A549 (cell line): ENCODE measurements at regions of chr12 and their contacts with region 1.

Region 1: DNA sequence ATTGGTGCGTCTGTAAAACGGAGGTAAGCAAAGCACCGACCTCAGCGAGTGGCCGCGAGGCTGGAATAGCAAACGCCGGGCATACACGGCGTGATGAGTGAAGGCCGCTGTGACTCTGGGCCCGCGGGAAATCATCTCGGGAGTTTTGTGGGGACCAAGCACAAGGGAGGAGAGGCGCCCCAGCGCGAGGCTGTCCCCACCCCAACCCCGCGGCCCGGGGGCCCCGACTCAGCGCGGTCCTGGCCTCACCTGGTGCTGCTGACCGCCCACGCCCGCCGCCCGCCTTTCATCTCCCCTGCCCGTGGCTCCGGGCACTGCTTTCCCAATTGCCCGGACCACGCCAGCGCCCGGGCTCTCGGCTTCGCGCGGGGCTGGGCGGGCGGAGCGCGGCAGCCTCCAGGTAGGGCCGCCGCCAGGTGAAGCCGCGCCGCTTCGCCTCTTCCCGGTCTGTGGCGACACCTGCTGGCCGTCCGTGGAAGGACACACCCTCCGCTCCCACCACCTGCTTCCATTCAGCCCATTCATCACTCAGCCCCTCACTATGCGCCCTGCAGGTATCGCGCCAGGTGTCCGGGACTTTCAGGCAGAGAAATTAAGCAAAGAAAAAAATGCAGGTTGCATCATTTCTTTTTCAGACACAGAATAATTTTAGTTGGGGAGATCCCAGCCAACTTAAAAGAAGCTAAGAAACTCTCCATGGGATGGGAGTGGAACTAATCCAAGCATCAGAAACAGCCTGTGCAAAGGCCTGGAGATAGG is 360.4 kb downstream of the MED13L start:
- DNase-seq: peak; percentile 44 to 60
- ATAC-seq: peak; percentile 85 to 94
- H3K4me3 ChIP-seq: peak overlapping the region; percentile 40
- H3K27ac ChIP-seq: peak overlapping the region; percentile 65 to 76; a peak in 5 of 6 replicates
- H3K4me1 ChIP-seq: no peaks in the 10 kb centered on the region
- CTCF ChIP-seq: peak; percentile 94
- EP300 ChIP-seq: no peak
- POLR2A ChIP-seq: no peak
- RAD21 ChIP-seq: peak; percentile 94 to 99

Region 2: GRCh38 chr12:114625294-114625851 is 1291.7 kb before region 1 on chr12:
- CTCF ChIA-PET with region 1: interaction called, 59 read pairs
- POLR2A ChIA-PET with region 1: no interaction called
- DNase-seq: peak; percentile 65 to 90
- ATAC-seq: peak; percentile 93 to 96
- H3K4me3 ChIP-seq: no peak overlapping the region
- H3K27ac ChIP-seq: peak overlapping the region; percentile 72 to 75
- H3K4me1 ChIP-seq: peaks cover 43% of the 10 kb centered on the region
- CTCF ChIP-seq: peak; percentile 86
- EP300 ChIP-seq: peak; percentile 63 to 86; a peak in 4 of 5 replicates
- POLR2A ChIP-seq: no peak
- RAD21 ChIP-seq: peak; percentile 94

Region 3: DNA sequence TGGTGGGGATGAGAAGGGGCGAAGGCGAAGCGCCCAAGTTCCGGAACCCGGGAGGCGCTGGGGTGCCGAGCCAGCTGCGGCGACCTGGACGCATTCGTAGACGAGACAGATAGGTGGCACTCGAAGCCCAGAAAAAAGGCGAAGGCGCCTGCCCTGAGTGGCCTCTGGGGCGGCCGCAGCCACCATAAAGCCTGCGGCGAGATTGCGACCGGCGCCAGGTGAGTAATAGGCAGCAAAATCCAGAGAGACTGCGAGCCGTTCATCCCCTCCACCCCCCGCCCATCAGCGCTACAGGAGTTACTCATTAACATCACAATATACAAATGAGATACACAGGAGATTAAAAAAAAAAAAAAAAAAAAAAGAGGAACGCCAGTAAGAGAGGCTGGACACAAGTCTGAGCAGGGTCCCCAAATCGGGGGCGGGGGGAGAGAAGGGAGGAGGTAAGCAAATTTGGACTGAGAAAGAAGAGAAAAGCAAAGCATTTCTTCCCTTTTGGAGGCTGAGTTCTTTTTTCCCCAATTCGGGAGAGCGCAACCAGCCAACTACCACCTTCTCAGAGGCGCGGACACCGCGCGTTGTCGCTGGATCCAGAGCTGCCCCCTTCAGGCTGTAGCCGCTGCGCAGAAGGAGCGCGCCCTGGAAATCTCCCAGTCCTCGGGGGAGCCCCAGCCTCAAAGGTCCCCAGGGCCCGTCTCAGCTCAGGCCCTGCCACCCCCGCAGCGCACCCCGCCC is 1248.8 kb before region 1 on chr12:
- CTCF ChIA-PET with region 1: interaction called, 31 read pairs
- POLR2A ChIA-PET with region 1: no interaction called
- DNase-seq: peak; percentile 91 to 94
- ATAC-seq: peak; percentile 85 to 93
- H3K4me3 ChIP-seq: peak overlapping the region; percentile 57
- H3K27ac ChIP-seq: peak overlapping the region; percentile 84 to 92
- H3K4me1 ChIP-seq: peaks cover 22% of the 10 kb centered on the region; the same call in 2 of the 3 replicates
- CTCF ChIP-seq: peak; percentile 63
- EP300 ChIP-seq: no peak
- POLR2A ChIP-seq: no peak
- RAD21 ChIP-seq: peak; percentile 89 to 96

Region 4: GRCh38 chr12:115871714-115872113 is 45.4 kb before region 1 on chr12:
- CTCF ChIA-PET with region 1: interaction called, 38 read pairs
- POLR2A ChIA-PET with region 1: no interaction called
- DNase-seq: peak; percentile 66 to 69
- ATAC-seq: peak; percentile 85 to 94
- H3K4me3 ChIP-seq: no peak overlapping the region
- H3K27ac ChIP-seq: peak overlapping the region in 1 of 2 experiments; percentile 22; a peak in 3 of 6 replicates
- H3K4me1 ChIP-seq: peaks cover 36% of the 10 kb centered on the region
- CTCF ChIP-seq: peak; percentile 43
- EP300 ChIP-seq: no peak
- POLR2A ChIP-seq: no peak
- RAD21 ChIP-seq: peak in 1 of 2 experiments; percentile 25; a peak in 1 of 5 replicates

Region 5: GRCh38 chr12:115932066-115932465 is 15.0 kb after region 1 on chr12:
- CTCF ChIA-PET with region 1: interaction called, 13 read pairs
- POLR2A ChIA-PET with region 1: no interaction called
- DNase-seq: no peak
- ATAC-seq: no peak
- H3K4me3 ChIP-seq: no peak overlapping the region
- H3K27ac ChIP-seq: no peak overlapping the region
- H3K4me1 ChIP-seq: no peaks in the 10 kb centered on the region
- CTCF ChIP-seq: no peak
- EP300 ChIP-seq: no peak
- POLR2A ChIP-seq: no peak
- RAD21 ChIP-seq: no peak